Right ventricle myocardium inferior (tissue), 1 donor: ENCODE measurements at regions of chr11 and their contacts with region 1.

Region 1: DNA sequence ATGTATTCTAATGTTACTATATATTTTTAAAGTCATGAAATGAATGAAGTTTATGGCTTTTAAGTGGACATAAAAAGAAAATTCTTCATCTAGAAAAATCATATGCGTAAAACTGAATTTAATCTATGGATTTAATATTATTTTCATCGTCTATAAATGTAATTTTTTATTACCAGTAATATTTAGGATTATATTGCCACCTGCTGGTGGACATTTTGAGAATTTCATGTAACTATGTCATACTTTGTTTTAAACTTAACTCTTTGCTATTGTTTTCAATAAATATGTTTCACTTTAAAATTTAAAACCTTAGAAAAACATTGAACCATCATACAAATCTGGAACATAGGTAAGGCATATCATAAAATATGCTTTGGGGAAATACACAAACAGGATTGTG is 66.5 kb upstream of the CEP126 start:
- DNase-seq: no peak
- ATAC-seq: no peak

Region 2: GRCh38 chr11:101456812-101457211 is 391.4 kb before region 1 on chr11:
- intact Hi-C with region 1: loop called (anchors 5 kb)
- DNase-seq: no peak
- ATAC-seq: no peak

Region 3: GRCh38 chr11:101807531-101807930 is 40.7 kb before region 1 on chr11:
- intact Hi-C with region 1: no loop called
- DNase-seq: no peak
- ATAC-seq: no peak